ENCODE measurements at regions of chr4 and their contacts with region 1.

Region 1: GRCh38 chr4:158268553-158268952 is 58.3 kb downstream of the TMEM144 start:
- DNase-seq: no peak
- H3K4me3 ChIP-seq: no peak overlapping the region
- H3K4me3 Mint-ChIP-seq: no peak overlapping the region
- H3K27ac Mint-ChIP-seq: no peak overlapping the region
- H3K4me1 ChIP-seq: no peaks in the 10 kb centered on the region
- H3K4me1 Mint-ChIP-seq: no peaks in the 10 kb centered on the region
- H3K27me3 ChIP-seq: no peaks in the 10 kb centered on the region
- H3K27me3 Mint-ChIP-seq: no peaks in the 10 kb centered on the region
- CTCF ChIP-seq: peak in 1 of 2 experiments; percentile 18

Region 2: GRCh38 chr4:157934151-157934550 is 334.4 kb before region 1 on chr4:
- CTCF ChIA-PET with region 1: no interaction called
- POLR2A ChIA-PET with region 1: no interaction called
- intact Hi-C with region 1: no loop called
- DNase-seq: no peak
- H3K4me3 ChIP-seq: no peak overlapping the region
- H3K4me3 Mint-ChIP-seq: no peak overlapping the region
- H3K27ac Mint-ChIP-seq: no peak overlapping the region
- H3K4me1 ChIP-seq: no peaks in the 10 kb centered on the region
- H3K4me1 Mint-ChIP-seq: no peaks in the 10 kb centered on the region
- H3K27me3 ChIP-seq: no peaks in the 10 kb centered on the region
- H3K27me3 Mint-ChIP-seq: no peaks in the 10 kb centered on the region
- CTCF ChIP-seq: no peak

Region 3: DNA sequence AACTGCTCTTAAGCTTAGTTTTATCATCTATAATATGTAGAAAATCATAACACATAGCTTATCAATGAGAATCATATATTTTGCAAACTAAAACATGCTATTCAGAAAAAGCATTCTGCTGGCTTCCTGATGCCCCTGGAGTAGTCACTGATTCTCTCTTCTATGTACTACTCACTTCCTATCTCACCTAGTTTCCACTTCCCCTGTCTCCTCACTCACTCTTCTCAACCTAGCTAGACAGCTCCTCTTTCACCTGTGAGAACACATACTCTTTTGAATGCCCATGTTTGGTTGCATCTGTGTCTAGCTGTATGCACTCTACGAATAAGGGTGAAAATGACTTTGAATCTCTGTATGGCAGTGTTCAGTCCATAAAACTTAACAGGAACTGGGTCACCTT is 48.9 kb before region 1 on chr4:
- CTCF ChIA-PET with region 1: no interaction called
- POLR2A ChIA-PET with region 1: no interaction called
- intact Hi-C with region 1: no loop called
- DNase-seq: no peak
- H3K4me3 ChIP-seq: no peak overlapping the region
- H3K4me3 Mint-ChIP-seq: no peak overlapping the region
- H3K27ac Mint-ChIP-seq: no peak overlapping the region
- H3K4me1 ChIP-seq: no peaks in the 10 kb centered on the region
- H3K4me1 Mint-ChIP-seq: no peaks in the 10 kb centered on the region
- H3K27me3 ChIP-seq: no peaks in the 10 kb centered on the region
- H3K27me3 Mint-ChIP-seq: no peaks in the 10 kb centered on the region
- CTCF ChIP-seq: no peak

Region 4: GRCh38 chr4:158327525-158327924 is 59.0 kb after region 1 on chr4:
- CTCF ChIA-PET with region 1: no interaction called
- POLR2A ChIA-PET with region 1: no interaction called
- intact Hi-C with region 1: loop called (anchors 5 kb)
- DNase-seq: peak; percentile 53 to 72
- H3K4me3 ChIP-seq: no peak overlapping the region
- H3K4me3 Mint-ChIP-seq: no peak overlapping the region
- H3K27ac Mint-ChIP-seq: no peak overlapping the region
- H3K4me1 ChIP-seq: no peaks in the 10 kb centered on the region
- H3K4me1 Mint-ChIP-seq: no peaks in the 10 kb centered on the region
- H3K27me3 ChIP-seq: no peaks in the 10 kb centered on the region
- H3K27me3 Mint-ChIP-seq: no peaks in the 10 kb centered on the region
- CTCF ChIP-seq: no peak

Measured in Caco-2 (cell line).